ENCODE measurements at regions of chr12 and their contacts with region 1.

Region 1: DNA sequence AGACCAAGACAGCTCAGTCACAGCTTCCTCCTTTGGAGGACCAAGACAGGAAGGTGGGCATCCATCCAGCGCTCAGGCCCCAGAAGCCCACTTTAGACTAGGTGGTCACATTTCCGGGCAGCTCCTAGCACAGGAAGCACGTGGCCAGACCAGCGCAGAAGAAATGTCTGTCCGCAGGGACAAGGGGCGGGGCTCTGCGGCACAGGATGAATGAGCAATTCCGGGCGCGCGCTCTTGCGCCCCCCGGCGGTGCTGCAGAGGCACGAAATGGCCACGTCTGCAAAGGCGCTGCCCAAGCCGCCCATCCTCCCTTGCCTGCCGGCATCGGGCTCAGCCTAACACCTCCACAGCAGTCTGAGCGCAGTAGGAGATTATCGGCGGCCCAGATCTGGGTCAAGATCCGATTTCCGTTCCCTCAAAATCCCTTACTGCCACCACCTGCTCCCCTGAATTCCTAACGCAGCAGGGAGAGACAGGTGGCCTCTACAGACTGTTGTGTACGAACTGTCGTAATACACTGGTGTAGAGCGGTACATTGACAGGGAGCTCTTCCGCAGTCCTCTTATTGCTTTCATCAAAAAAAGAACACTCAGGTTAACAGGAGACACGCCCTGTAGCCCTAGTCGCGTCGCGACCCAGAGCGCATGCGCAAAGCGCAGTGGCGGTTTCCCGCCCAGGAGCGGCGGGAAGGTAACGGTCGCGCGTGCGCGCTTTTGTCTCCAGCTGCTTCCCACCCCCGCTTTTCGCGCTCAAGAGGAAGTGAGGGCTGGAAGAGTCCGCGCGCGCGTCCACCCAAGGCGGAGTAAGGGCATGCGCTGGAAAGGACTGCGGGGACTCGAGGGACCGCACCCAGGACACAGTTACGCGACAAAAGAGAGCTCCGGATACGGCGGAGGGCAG is 794 bp downstream of the TUBA1B start:
- DNase-seq: peak; percentile 98
- H3K4me3 Mint-ChIP-seq: peak overlapping the region; percentile 98
- H3K27ac Mint-ChIP-seq: peak overlapping the region; percentile 99
- H3K4me1 Mint-ChIP-seq: peaks cover 36% of the 10 kb centered on the region
- H3K27me3 Mint-ChIP-seq: peaks cover 2% of the 10 kb centered on the region

Region 2: DNA sequence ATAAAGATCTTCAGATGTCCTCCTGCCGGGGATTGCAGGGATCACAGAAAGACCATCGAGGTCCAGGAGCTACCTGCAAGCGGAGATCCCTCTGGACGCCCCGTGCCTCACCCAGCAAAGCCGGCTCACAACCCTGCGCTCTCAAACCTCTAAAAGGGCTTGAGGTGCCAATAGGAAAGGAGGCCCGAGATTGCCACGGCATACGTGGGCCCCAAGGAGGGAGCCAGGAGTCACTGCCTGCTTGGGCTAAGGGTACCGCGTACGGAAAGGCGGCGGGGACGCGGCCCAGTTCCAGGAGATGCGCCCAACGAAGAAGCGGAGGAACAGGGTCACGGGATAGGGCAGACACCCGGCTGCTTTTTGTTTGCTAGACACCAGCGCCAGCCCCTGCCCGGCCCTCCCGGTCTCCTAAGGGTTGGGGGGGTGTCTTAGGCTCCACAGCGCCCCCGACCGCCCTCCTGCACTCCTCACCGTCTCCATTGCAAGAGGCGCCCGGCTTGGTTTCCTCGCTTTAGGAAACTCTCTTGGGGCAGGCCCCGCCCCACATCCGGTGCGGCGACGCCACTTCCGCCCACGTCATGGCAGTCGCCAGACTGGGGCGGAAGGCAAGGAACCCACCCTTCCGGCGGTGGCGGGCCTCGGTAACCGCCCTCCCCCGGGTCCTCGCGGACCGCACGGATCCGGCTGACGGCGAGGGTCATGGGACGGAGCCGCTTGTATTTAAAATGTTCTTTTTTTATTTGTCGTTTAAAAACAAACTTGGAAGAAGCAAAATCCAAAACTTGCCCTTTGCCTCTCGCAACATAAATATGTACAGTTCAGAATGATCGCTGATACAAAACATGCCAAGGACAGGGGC is 111.9 kb before region 1 on chr12 and contains the start of gene PRKAG1:
- intact Hi-C with region 1: loop called (anchors 1 kb)
- DNase-seq: peak; percentile 99
- H3K4me3 Mint-ChIP-seq: peak within 1 kb of the TSS; percentile 90
- H3K27ac Mint-ChIP-seq: peak within 1 kb of the TSS; percentile 91
- H3K4me1 Mint-ChIP-seq: peaks cover 25% of the 10 kb centered on the region
- H3K27me3 Mint-ChIP-seq: no peaks in the 10 kb centered on the region
- total RNA-seq, gene PRKAG1: 75.3 and 89.8 TPM in 2 replicates

Region 3: GRCh38 chr12:49069507-49070346 is 60.7 kb before region 1 on chr12 and contains the start of gene RHEBL1:
- intact Hi-C with region 1: loop called (anchors 1 kb)
- DNase-seq: peak; percentile 100
- H3K4me3 Mint-ChIP-seq: peak within 1 kb of the TSS; percentile 94
- H3K27ac Mint-ChIP-seq: peak within 1 kb of the TSS; percentile 87
- H3K4me1 Mint-ChIP-seq: peaks cover 25% of the 10 kb centered on the region
- H3K27me3 Mint-ChIP-seq: no peaks in the 10 kb centered on the region
- total RNA-seq, gene RHEBL1: 10.9 and 11.8 TPM in 2 replicates

Region 4: DNA sequence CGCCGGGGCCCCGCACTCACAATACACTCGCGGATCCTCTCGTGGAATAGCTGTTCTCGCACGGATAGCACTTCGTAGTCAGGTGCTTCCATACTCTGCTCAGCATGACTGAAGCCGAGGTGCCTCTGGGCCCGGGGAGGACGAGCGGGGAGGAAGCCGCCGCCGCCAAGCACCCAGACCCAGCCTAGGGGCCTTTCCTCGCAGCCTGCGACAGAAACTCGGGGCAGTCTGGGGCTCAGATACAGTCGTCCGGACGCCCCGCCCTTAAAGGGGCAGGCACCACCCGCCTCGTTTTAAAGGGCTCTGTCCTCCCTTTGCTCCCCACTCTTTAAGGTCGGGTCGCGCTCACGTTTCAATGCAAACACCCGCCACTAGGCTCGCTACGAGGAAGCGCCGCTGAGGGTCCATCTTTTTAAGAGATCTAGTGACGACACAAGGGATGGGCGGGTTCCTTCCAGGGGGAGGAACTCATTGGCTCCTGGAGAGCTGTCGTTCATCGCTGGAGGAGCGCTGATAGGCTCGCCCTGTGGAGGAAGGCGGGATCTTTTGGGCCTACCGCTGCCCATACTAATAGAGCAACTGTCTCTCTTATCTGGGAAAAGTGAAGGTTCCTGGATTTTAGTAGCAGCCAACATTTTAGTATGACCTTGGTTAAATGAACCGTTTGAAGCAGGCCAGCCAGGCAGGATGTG is 19.8 kb before region 1 on chr12 and contains the start of gene LMBR1L:
- intact Hi-C with region 1: loop called (anchors 1 kb)
- DNase-seq: peak; percentile 99
- H3K4me3 Mint-ChIP-seq: peak within 1 kb of the TSS; percentile 97
- H3K27ac Mint-ChIP-seq: peak within 1 kb of the TSS; percentile 94
- H3K4me1 Mint-ChIP-seq: peaks cover 24% of the 10 kb centered on the region
- H3K27me3 Mint-ChIP-seq: no peaks in the 10 kb centered on the region
- total RNA-seq, gene LMBR1L: 39.9 and 43.7 TPM in 2 replicates

Region 5: GRCh38 chr12:49161092-49161795 is 30.8 kb after region 1 on chr12:
- intact Hi-C with region 1: no loop called
- DNase-seq: no peak
- H3K4me3 Mint-ChIP-seq: no peak overlapping the region
- H3K27ac Mint-ChIP-seq: no peak overlapping the region
- H3K4me1 Mint-ChIP-seq: peaks cover 2% of the 10 kb centered on the region
- H3K27me3 Mint-ChIP-seq: no peaks in the 10 kb centered on the region

Region 6: DNA sequence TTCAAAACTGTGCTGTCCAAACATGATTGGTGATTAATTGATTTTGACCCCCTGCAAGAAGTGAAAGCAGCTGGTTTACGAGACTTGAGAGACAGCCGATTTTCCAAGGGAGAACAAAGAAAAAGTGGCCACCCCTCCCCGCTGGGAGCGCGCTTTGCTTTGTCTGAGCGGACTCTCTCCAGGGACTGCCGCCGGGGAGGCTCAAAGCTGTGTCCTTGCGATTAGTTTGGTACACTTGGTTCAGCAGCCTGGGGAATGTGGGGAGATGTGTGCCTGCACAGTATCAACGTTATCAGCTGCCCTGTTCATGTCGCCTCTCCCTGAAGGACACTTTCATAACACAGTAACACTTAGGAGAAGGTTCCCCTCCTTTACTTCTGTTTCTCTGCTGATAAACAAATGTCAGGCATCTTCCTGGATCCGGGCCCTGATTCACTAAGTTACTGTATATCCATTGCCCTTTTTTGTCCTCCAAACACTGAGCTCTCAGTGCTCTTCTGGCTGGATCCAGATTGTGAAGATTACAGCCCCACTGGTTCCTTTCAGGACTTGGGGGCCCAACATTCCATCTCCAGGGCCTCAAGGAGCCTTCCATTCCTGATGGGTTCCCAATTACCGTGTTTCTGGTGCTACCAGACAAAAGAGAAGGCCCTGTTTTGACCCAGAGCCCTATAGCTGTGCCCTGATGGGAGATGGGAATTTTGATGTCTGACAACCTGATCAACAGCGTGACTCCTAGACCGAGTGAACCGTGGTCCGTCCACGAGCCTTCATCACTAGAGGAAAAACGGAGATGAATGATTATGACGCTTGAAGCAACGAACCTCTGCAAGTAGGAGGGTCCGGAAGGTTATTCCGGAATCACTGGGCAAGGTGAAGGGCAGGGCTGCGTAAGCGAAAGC is 102.8 kb after region 1 on chr12:
- intact Hi-C with region 1: loop called (anchors 1 kb)
- DNase-seq: no peak
- H3K4me3 Mint-ChIP-seq: peak overlapping the region; percentile 88
- H3K27ac Mint-ChIP-seq: peak overlapping the region; percentile 77
- H3K4me1 Mint-ChIP-seq: peaks cover 14% of the 10 kb centered on the region
- H3K27me3 Mint-ChIP-seq: peaks cover 1% of the 10 kb centered on the region

Region 7: DNA sequence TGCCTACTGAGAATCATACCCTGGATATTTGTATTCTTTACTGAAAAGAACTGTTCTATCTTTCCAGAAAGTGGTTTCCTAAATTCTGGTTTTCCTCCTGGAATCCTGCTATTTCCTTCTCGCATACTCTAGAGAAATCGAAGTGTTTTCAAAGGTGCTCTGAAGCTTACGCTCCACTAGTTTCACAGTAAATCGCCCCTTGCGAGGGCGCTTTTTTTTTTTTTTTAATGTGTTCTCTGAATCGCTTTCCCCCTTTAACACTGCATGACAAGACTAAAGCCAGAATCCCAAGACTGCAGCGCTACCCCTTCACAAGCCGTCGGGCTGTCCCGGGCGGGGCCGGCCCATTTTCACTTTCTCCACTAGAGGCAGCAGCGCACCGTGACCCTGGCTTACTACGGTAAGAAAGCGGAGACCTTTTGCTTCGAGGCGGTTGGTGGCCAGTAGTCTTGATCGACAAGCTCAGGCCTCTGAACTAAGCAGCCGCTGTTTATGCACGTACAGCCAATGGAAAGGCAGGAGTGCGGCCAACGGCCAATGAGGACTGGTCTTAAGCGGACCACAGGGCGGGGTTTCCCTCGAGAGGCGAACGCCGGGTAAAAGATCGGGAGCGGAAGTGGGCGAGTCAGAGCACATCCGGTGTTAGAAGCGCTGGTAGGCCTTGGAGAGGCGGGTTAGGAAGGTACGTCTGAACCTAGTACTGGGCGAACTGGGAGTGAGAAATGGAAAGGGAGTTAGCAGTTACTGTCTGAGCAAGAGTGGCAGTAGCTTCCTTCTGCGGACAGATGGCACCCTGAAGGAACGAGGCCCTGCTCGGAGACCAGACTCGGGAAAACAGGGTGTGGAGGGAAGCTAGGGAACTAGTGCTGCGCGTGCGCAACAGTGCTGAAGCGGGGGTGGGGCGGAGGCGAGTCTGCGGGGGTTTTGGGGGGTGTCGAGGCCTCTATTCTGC is 610.8 kb after region 1 on chr12 and contains the start of gene TMBIM6:
- intact Hi-C with region 1: loop called (anchors 5 kb)
- DNase-seq: peak; percentile 100
- H3K4me3 Mint-ChIP-seq: peak within 1 kb of the TSS; percentile 90
- H3K27ac Mint-ChIP-seq: peak within 1 kb of the TSS; percentile 95
- H3K4me1 Mint-ChIP-seq: peaks cover 31% of the 10 kb centered on the region
- H3K27me3 Mint-ChIP-seq: peaks cover 5% of the 10 kb centered on the region
- total RNA-seq, gene TMBIM6: 370 and 372 TPM in 2 replicates

Measured in activated CD4-positive, alpha-beta T cell treated with anti-CD3 and anti-CD28 coated beads, Interleukin-2, amount 10 ng/mL, durations not matched to agents 24 days and 14 days (primary cell).